ENCODE measurements at regions of chr14 and their contacts with region 1.

Region 1: DNA sequence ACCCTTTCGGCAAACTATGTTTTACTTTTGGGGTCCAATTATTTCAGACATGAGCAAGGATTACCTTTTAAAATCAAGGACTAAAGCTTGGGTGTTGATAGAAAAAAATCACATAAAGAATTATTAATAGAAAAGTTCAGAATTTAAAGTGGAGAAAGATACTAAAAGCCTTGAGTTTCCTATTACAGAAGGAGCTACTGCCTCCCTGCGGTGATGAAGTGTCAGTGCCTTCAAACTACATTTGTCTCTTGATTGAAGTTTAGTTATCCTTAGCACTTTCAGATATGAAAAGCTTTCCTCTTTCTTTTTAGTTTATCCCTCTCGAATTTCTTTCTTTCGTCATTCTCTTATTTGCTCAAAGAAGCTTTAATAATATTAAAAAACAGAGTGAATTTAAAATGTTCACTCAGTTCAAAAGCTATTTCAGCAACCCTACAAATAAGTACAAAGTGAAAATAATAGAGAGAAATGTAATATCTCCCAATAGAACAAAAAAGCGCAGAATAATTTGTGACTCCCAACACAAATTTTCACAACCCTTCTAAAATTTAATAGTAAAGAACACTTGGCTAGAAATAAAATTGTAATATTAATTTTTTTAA is 87.6 kb downstream of the SEC23A start:
- DNase-seq: no peak
- ATAC-seq: no peak

Region 2: DNA sequence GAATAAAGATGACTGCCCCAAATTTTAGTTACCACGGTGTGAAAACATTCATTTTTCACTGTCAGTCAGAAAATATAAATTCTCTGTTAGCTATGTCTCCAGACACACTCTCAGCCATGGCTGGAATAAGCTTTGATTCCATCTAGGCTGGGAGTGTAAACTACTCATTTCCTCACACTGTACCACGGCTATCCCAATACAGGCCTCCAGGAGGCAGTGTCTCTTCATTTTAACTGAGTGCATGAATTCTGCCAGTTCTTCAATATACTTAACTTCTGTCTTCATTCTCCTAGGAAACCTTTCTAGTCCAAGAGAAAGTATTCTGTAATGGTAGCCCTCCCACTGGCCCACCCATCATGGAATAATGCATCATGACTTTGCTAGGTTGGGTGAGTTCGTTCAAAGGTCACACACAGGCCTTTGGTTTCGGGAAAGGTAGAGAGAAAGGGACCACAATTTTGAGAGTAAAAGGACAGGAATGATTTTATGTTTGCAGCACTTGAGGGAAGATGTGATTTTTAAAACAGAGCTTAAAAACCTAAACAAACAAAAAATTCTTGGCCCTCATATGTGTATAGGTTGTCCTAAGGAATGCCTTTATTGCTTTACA is 293.5 kb before region 1 on chr14:
- intact Hi-C with region 1: loop called (anchors 10 kb)
- DNase-seq: peak; percentile 35
- ATAC-seq: peak; percentile 71

Region 3: GRCh38 chr14:38867561-38868150 is 147.8 kb before region 1 on chr14:
- intact Hi-C with region 1: loop called (anchors 5 kb)
- DNase-seq: peak; percentile 53
- ATAC-seq: peak; percentile 81

Region 4: DNA sequence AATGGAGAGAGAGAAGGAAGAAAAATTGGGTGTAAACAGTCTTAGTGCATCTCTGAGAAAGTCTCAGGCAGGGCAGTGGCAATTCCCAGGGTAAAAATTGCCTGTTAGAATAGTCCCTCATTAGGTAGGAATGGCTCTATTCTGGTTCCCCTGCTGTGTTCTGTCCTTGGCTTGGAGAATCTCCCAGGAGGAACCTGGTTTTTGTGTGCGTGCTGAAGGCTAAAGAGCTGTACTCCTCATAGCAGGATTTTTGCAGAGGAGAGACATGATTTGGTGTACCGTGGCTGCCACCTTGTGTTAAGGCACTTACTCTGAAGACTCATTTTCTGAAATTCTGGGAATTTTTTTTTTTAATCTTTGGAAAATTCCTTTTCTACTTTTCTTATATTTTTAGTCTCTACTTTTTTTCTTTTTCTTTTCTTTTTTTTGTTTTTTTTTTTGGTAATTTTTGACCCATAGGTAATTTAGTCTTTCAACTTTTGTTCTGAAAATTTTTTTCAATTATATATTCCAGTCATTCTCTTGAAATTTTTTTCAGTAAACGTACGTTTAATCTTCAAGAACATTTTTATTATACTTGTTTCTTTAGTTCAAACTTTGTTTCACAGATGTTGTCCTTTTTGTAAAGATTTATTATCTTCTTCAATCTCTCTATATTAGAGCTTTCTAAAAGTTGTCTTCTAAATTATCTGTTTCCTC is 352.9 kb after region 1 on chr14:
- intact Hi-C with region 1: no loop called
- DNase-seq: peak; percentile 34
- ATAC-seq: peak; percentile 89

Measured in left ventricle myocardium superior (tissue), 1 donor.